ENCODE measurements at regions of chrX and their contacts with region 1.

Region 1: GRCh38 chrX:154526901-154527675 is 11.1 kb upstream of the FAM3A start:
- DNase-seq: peak; percentile 73
- ATAC-seq: peak; percentile 95
- H3K4me3 Mint-ChIP-seq: peak overlapping the region; percentile 54
- H3K27ac Mint-ChIP-seq: no peak overlapping the region
- H3K4me1 Mint-ChIP-seq: peaks cover 10% of the 10 kb centered on the region; the same call in 1 of the 2 replicates
- H3K27me3 Mint-ChIP-seq: peaks cover 43% of the 10 kb centered on the region
- CTCF ChIP-seq: no peak

Region 2: GRCh38 chrX:154490414-154491083 is 36.5 kb before region 1 on chrX and contains the start of gene SLC10A3:
- CTCF ChIA-PET with region 1: interaction called, 14 read pairs
- POLR2A ChIA-PET with region 1: interaction called, 5 read pairs
- DNase-seq: peak; percentile 91
- ATAC-seq: peak; percentile 92
- H3K4me3 Mint-ChIP-seq: peak within 1 kb of the TSS; percentile 80
- H3K27ac Mint-ChIP-seq: peak within 1 kb of the TSS; percentile 94
- H3K4me1 Mint-ChIP-seq: peaks cover 4% of the 10 kb centered on the region; the same call in 1 of the 2 replicates
- H3K27me3 Mint-ChIP-seq: peaks cover 5% of the 10 kb centered on the region; the same call in 1 of the 2 replicates
- CTCF ChIP-seq: no peak
- total RNA-seq, gene SLC10A3: 8.7 to 9.8 TPM (median 9.6 TPM) in 3 replicates

Region 3: DNA sequence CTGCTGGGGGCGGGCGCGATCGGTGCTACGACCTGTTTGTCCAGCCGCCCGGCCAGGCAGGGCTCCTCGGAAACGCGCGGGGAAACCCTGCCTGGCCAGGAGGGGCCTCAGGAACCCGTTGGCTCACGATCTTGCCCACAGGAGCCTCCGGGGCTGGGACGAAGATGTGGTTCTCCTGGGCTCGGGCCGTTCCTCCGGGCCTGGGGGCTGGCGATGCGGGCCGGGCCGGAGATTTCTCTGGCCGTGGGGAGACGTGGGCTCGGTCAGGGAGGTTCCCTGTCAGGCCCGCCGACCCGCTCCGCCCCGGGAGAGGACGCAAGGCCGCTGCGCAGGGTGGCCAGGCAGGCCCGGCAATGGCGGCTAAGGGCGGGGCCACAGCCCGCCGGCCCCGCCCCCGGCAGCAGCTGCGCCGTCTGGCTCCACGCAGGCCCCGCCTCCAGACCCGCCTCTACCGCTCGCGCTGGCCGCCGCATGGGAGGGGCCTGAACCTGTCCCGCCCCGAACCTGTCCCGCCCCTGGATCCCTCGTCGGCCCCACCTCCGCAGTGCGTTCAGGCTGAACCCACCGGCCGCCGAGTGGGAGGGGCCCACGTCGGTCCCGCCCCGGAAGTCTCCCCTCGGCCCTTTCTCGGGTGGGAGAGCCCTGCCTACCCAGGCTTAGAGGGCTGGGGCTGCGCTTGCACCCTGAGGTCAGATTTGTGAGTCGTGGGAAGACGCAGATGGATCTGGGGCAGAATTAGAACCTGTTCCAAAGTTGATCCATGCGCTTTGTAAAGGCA is 11.0 kb before region 1 on chrX and contains the start of gene FAM3A:
- CTCF ChIA-PET with region 1: interaction called, 12 read pairs
- POLR2A ChIA-PET with region 1: interaction called, 13 read pairs
- DNase-seq: peak; percentile 92
- ATAC-seq: peak; percentile 96
- H3K4me3 Mint-ChIP-seq: peak within 1 kb of the TSS; percentile 74
- H3K27ac Mint-ChIP-seq: peak within 1 kb of the TSS; percentile 97
- H3K4me1 Mint-ChIP-seq: peaks cover 14% of the 10 kb centered on the region
- H3K27me3 Mint-ChIP-seq: peaks cover 17% of the 10 kb centered on the region; the same call in 1 of the 2 replicates
- CTCF ChIP-seq: no peak
- total RNA-seq, gene FAM3A: 23.5 to 26.5 TPM (median 25.0 TPM) in 3 replicates

Region 4: GRCh38 chrX:154549766-154550165 is 22.7 kb after region 1 on chrX:
- CTCF ChIA-PET with region 1: no interaction called
- POLR2A ChIA-PET with region 1: no interaction called
- DNase-seq: no peak
- ATAC-seq: no peak
- H3K4me3 Mint-ChIP-seq: no peak overlapping the region
- H3K27ac Mint-ChIP-seq: 0 out of 2 replicates have a peak overlapping the region, but pooled peaks have one; percentile 38
- H3K4me1 Mint-ChIP-seq: peaks cover 11% of the 10 kb centered on the region
- H3K27me3 Mint-ChIP-seq: no peaks in the 10 kb centered on the region
- CTCF ChIP-seq: no peak